ENCODE measurements at regions of chr14 and their contacts with region 1.

Region 1: DNA sequence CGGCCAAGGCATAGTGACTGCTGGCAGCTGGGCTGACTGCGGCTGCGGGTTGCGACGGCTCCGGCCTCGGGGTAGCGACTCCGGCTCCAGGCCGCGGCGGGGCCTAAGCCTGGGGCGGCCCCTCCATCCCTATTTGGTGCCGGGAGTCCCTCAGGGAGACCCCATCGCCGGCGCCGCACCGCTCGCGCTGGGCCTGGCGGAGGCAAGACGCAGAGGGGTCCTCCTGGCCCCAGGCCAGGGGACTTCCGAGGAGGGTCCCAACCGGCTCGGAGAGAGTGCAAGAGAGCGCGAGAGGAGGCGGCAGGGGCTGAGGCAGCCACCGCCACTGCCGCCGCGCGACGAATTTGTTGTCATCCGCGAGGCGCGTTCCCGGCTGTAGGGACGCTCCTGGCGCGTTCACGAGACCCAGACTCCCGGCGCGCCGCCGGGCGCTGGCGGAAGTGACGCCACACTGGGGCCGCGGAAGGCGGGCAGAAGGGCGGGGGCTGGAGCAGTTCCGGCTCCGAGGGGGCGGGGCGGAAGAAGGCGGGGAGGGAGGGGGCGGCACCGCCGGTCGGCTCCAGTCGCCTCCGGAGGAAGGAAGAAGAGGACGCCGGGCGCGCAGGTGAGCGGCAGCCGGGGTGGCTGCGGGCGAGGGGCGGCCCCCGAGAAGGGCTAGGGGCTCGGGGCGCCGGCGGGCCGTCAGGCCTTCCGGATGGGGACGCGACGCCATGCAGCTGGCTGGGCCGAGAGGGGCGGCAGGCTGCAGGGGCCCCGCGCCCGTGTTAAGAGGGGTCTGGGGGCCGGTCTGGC is at the starts of genes ATG2B and GSKIP:
- DNase-seq: peak; percentile 87
- H3K4me3 ChIP-seq: peak within 1 kb of the TSS; percentile 74 to 95 (median 88)
- H3K27ac ChIP-seq: peak within 1 kb of the TSS; percentile 71
- H3K4me1 ChIP-seq: peaks cover 22% of the 10 kb centered on the region
- H3K27me3 ChIP-seq: no peaks in the 10 kb centered on the region
- CTCF ChIP-seq: no peak
- total RNA-seq, gene ATG2B: 15.6 to 21.8 TPM
- total RNA-seq, gene GSKIP: 32.2 to 61.0 TPM

Region 2: DNA sequence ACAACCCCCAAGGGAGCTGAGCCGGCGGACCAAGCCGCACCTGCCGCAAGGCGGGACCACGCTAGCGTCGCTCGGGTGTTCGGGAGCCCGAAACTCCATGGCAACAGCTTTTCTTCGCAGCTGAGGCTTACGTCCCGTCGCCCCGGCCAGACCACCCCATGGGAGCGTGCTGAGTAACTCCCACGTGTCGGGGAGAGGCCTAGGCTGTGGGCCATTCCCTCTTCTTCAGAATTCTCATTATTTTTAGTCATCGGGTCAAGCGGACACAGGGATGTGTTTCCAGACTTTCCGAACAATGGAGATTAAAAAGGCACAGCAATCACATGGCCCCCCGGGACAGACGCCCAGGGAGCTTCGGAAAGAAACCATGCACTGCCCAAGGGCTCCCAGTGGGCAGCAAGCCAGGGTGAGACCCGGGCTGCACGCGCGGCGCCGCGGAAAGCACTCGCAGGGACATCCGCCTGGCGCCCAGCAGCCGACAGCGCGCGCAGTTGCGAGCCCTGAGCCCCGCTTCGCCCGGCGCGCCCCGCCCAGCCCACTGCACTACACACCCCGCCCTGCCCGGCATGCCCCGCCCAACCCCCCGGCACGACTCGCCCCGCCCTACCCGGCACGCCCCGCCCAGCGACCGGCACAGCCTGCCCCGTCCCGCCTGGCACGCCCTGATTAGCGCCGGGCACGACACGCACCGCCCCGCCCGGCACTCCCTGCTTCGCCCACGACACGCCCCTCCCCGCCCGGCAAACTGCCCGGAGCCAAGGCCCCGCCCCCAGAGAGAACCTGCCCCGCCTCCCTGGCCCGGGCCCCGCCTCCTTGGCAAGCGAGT is 28.3 kb after region 1 on chr14:
- CTCF ChIA-PET with region 1: no interaction called
- dilution Hi-C with region 1: no loop called
- in situ Hi-C with region 1: no loop called
- intact Hi-C with region 1: loop called (anchors 1 kb)
- DNase-seq: peak; percentile 94
- H3K4me3 ChIP-seq: peak overlapping the region; percentile 77 to 99 (median 82)
- H3K27ac ChIP-seq: peak overlapping the region; percentile 60
- H3K4me1 ChIP-seq: peaks cover 11% of the 10 kb centered on the region
- H3K27me3 ChIP-seq: no peaks in the 10 kb centered on the region
- CTCF ChIP-seq: no peak

Region 3: GRCh38 chr14:96445844-96446710 is 82.9 kb after region 1 on chr14:
- CTCF ChIA-PET with region 1: no interaction called
- dilution Hi-C with region 1: no loop called
- in situ Hi-C with region 1: no loop called
- intact Hi-C with region 1: no loop called
- DNase-seq: no peak
- H3K4me3 ChIP-seq: no peak overlapping the region
- H3K27ac ChIP-seq: no peak overlapping the region
- H3K4me1 ChIP-seq: no peaks in the 10 kb centered on the region
- H3K27me3 ChIP-seq: no peaks in the 10 kb centered on the region
- CTCF ChIP-seq: no peak

Region 4: DNA sequence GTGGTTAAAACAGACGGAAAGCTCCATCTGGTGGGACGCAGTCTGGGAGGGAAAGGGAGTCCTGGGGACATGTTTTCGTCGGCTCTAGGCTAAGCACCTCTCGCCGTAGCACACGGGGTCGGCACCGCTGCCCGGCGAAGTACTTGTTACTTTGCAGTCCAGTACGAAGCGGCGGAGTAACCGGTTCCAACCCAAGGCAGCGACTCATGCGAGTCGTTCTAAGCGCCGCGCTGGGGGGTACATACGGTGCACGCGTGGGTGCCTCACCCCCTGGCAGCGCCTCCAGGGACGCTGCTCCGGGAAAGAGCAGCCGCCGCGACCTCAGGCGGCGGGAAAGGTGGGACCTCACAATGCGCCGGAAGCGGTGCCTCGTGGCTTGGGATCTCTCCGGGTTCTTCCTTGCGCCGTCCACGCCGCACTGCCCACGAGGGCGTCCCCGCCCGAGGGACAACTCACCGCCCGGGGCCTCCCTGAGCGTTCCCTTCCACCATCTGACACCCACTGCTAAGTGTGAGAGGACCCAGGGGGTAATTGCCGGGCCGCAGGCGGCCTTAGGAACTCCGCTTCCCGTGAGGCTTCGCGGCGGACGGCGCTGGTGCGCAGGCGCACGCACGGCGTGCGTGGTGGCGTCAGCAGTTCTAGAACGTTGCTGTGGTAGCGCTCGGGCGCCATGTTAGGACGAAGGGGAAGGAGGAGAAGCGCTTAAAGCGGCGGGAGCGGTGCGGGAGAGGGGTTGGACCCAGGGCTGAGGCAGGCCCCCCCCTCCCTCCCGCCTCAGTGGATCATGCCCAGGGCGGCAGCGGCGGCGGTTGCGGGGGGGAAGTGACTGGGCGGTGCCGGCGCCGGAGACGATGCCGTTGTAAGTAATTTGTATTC is 138.8 kb after region 1 on chr14 and contains the start of gene PAPOLA:
- CTCF ChIA-PET with region 1: no interaction called
- dilution Hi-C with region 1: no loop called
- in situ Hi-C with region 1: no loop called
- intact Hi-C with region 1: loop called (anchors 2 kb)
- DNase-seq: peak; percentile 94
- H3K4me3 ChIP-seq: peak within 1 kb of the TSS; percentile 98 to 100 (median 99)
- H3K27ac ChIP-seq: peak within 1 kb of the TSS; percentile 73
- H3K4me1 ChIP-seq: peaks cover 6% of the 10 kb centered on the region
- H3K27me3 ChIP-seq: no peaks in the 10 kb centered on the region
- CTCF ChIP-seq: peak in 1 of 2 donors; percentile 38
- total RNA-seq, gene PAPOLA: 117 to 152 TPM

Region 5: DNA sequence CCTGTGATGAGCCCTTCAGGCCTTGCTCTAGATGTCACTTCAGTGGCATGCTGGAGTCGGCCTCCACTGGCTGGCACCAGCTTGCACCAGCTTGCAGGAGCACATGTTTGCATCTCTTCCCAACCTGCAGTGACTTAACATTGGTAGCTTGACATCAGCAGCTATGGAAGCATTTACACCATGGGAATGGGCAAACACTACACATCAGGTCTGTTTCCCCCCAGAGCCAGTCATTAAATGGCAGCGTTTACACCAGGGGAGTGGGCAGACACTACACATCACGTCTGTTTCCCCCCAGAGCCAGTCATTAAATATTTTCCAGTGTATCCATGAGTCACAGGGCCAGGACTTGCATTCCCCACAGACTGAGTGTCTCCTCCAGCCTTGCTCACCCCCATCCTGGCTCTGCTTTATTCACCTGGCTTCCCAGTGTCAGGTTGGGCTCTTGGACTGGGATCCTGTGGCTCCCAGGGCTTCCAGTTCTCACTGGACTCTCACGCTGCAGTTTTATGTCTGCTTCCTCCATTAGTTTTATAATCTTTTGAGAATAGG is 382.4 kb after region 1 on chr14:
- CTCF ChIA-PET with region 1: no interaction called
- dilution Hi-C with region 1: no loop called
- in situ Hi-C with region 1: no loop called
- intact Hi-C with region 1: no loop called
- DNase-seq: no peak
- H3K4me3 ChIP-seq: no peak overlapping the region
- H3K27ac ChIP-seq: no peak overlapping the region
- H3K4me1 ChIP-seq: no peaks in the 10 kb centered on the region
- H3K27me3 ChIP-seq: peaks cover 6% of the 10 kb centered on the region
- CTCF ChIP-seq: no peak

Measured in mammary epithelial cell (primary cell).